ENCODE measurements at regions of chr11 and their contacts with region 1.

Region 1: GRCh38 chr11:662689-663274 is 25.7 kb downstream of the DRD4 start:
- DNase-seq: peak; percentile 75
- H3K4me3 ChIP-seq: no peak overlapping the region
- H3K27ac ChIP-seq: no peak overlapping the region
- H3K4me1 ChIP-seq: peaks cover 0 to 12% (median 2%) of the 10 kb centered on the region in 4 donors
- H3K27me3 ChIP-seq: no peaks in the 10 kb centered on the region
- CTCF ChIP-seq: peak; percentile 72 to 89 (median 76)
- EP300 ChIP-seq: no peak
- POLR2A ChIP-seq: no peak

Region 2: GRCh38 chr11:706957-707816 is 44.4 kb after region 1 on chr11:
- in situ Hi-C with region 1: no loop called
- intact Hi-C with region 1: loop called (anchors 1 kb)
- DNase-seq: peak; percentile 68
- H3K4me3 ChIP-seq: peak overlapping the region; percentile 47 to 73 (median 66)
- H3K27ac ChIP-seq: peak overlapping the region; percentile 92 to 94 (median 94)
- H3K4me1 ChIP-seq: peaks cover 23 to 77% (median 68%) of the 10 kb centered on the region in 4 donors
- H3K27me3 ChIP-seq: peaks cover 10% of the 10 kb centered on the region
- CTCF ChIP-seq: peak in 4 of 5 experiments; percentile 11 to 42 (median 20)
- EP300 ChIP-seq: no peak
- POLR2A ChIP-seq: no peak

Region 3: GRCh38 chr11:727859-728748 is 65.3 kb after region 1 on chr11:
- in situ Hi-C with region 1: loop called in 1 of 4 experiments (anchors 10 kb)
- intact Hi-C with region 1: no loop called
- DNase-seq: peak; percentile 87
- H3K4me3 ChIP-seq: no peak overlapping the region
- H3K27ac ChIP-seq: peak overlapping the region in 2 of 4 donors; percentile 11 to 19
- H3K4me1 ChIP-seq: peaks cover 8 to 35% (median 29%) of the 10 kb centered on the region in 4 donors
- H3K27me3 ChIP-seq: peaks cover 54% of the 10 kb centered on the region
- CTCF ChIP-seq: peak; percentile 97 to 99 (median 98)
- EP300 ChIP-seq: no peak
- POLR2A ChIP-seq: no peak

Region 4: GRCh38 chr11:1131033-1131911 is 468.5 kb after region 1 on chr11:
- in situ Hi-C with region 1: no loop called
- intact Hi-C with region 1: no loop called
- DNase-seq: no peak
- H3K4me3 ChIP-seq: no peak overlapping the region
- H3K27ac ChIP-seq: no peak overlapping the region
- H3K4me1 ChIP-seq: no peaks in the 10 kb centered on the region
- H3K27me3 ChIP-seq: peaks cover 10% of the 10 kb centered on the region
- CTCF ChIP-seq: no peak
- EP300 ChIP-seq: no peak
- POLR2A ChIP-seq: no peak